Lower leg skin (tissue), 4 donors: ENCODE measurements at regions of chr1 and their contacts with region 1.

Region 1: GRCh38 chr1:12124693-12125421 is 41.9 kb upstream of the TNFRSF1B start:
- DNase-seq: peak; percentile 76 to 96
- H3K4me3 ChIP-seq: no peak overlapping the region
- CTCF ChIP-seq: peak in 1 of 3 donors; percentile 92
- POLR2A ChIP-seq: no peak

Region 2: GRCh38 chr1:12208764-12209494 is 84.1 kb after region 1 on chr1:
- intact Hi-C with region 1: loop called (anchors 5 kb)
- DNase-seq: peak; percentile 80 to 97
- H3K4me3 ChIP-seq: no peak overlapping the region
- CTCF ChIP-seq: peak in 1 of 3 donors; percentile 95
- POLR2A ChIP-seq: no peak